GM12878 (cell line): ENCODE measurements at regions of chr20 and their contacts with region 1.

Region 1: GRCh38 chr20:25318471-25319240 is 70.8 kb downstream of the PYGB start:
- DNase-seq: peak; percentile 88
- ATAC-seq: peak; percentile 94
- H3K4me3 ChIP-seq: no peak overlapping the region
- H3K27ac ChIP-seq: peak overlapping the region; percentile 93
- H3K4me1 ChIP-seq: peaks cover 40% of the 10 kb centered on the region
- H3K27me3 ChIP-seq: no peaks in the 10 kb centered on the region
- CTCF ChIP-seq: no peak
- EP300 ChIP-seq: peak; percentile 77 to 89; a peak in 3 of 4 replicates
- POLR2A ChIP-seq: peak; percentile 77
- RAD21 ChIP-seq: no peak

Region 2: DNA sequence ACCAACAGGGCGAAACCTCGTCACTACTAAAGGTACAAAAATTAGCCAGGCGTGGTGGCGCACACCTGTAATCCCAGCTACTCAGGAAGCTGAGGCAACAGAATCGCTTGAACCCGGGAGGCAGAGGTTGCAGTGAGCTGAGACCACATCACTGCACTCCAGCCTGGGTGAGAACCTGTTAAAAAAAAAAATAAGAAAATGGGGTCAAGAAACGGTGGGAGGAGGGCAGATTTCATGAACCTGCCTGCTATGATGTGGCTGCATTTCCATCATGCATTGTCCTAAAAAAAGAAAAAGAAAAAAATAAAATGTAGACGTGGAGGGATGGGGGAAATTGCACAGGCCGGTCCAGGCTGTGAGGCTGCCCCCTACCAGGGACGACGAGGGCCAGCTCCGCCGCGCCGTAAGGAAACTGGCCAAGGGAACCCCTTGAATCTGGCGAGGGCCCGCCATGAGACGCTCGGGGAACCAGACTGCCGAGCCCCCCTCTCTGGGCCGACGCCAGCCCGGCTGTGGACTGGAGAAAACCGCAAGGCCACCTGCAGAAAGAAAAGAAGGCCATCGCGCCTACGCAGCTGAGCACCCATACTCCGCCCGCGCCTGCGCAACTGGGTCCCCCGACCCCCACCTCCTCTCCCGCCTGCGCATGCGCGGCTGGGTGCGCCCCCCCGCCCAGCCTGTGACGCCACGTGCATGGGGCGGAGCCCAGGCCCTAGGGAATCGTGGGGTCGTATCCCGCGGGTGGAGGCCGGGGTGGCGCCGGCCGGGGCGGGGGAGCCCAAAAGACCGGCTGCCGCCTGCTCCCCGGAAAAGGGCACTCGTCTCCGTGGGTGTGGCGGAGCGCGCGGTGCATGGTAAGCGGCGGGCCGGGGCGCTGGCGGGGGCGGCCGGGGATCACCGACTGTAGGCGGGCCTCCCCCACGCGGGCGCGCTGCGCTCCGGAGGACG is 123.4 kb before region 1 on chr20 and contains the start of gene ENTPD6:
- CTCF ChIA-PET with region 1: no interaction called
- POLR2A ChIA-PET with region 1: no interaction called
- RAD21 ChIA-PET with region 1: no interaction called
- SMC1A ChIA-PET with region 1: no interaction called
- in situ Hi-C with region 1: no loop called
- intact Hi-C with region 1: no loop called
- DNase-seq: peak; percentile 63
- ATAC-seq: peak; percentile 83
- H3K4me3 ChIP-seq: peak within 1 kb of the TSS; percentile 91
- H3K27ac ChIP-seq: peak within 1 kb of the TSS; percentile 59; the same call in 1 of the 2 replicates
- H3K4me1 ChIP-seq: peaks cover 11% of the 10 kb centered on the region
- H3K27me3 ChIP-seq: no peaks in the 10 kb centered on the region; a peak in 1 of 4 replicates
- CTCF ChIP-seq: peak in 2 of 3 experiments; percentile 3 to 8; a peak in 1 of 6 replicates
- EP300 ChIP-seq: no peak
- POLR2A ChIP-seq: peak; percentile 79
- RAD21 ChIP-seq: no peak
- polyA plus RNA-seq, gene ENTPD6: 0.53 to 2.5 TPM

Region 3: DNA sequence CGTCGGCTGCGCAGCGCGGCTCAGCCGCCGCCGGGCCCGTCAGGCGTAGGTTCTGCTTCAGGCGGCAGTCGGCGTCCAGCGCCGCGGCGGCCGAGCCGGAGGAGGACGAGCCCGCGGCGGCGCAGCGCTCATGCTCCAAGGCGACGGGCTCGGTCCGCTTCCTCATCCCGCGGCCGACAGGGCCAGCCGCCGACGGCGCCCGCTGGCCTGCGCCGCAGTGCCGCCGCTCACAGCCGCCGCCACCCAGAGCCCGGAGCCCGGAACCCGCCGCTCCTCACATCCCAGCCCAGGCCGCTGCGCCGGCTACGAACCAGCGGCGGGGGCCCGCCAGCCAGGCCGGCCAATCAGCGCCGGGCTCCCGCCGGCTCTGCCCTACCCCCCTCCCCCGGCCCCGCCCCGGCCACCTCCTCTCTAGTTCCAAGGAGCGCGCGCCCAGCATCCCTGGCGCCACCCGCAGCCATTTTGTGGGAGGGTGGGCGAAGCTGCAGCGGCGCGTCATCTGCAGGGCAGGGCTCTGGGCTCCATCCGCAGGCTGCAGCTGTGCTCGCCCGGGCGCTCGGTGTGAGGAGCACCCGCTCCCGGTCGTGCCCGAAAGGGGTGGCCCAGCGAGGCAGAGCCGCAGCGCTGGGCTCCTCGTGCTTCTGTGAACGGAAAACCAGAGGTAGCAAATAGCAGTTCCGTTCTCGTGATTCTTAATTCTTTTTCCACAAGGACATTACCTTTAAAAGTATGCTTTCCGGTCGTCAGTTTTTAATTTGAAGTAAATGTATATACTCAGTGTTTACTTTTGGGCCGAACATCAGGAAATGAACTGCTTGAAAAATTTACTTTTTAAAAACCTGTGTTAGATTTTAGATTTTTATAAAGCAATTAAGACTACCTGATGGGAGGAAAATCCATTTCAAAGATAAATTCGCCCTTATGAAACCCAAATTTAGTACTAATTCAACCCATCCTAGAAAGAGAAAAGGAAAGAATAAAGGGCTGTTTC is 72.2 kb after region 1 on chr20 and contains the start of gene ABHD12:
- CTCF ChIA-PET with region 1: no interaction called
- POLR2A ChIA-PET with region 1: no interaction called
- RAD21 ChIA-PET with region 1: interaction called, 7 read pairs
- SMC1A ChIA-PET with region 1: no interaction called
- in situ Hi-C with region 1: no loop called
- intact Hi-C with region 1: loop called (anchors 2 kb)
- DNase-seq: peak; percentile 77
- ATAC-seq: peak; percentile 96
- H3K4me3 ChIP-seq: peak within 1 kb of the TSS; percentile 78
- H3K27ac ChIP-seq: peak within 1 kb of the TSS; percentile 78
- H3K4me1 ChIP-seq: no peaks in the 10 kb centered on the region; the same call in 1 of the 2 replicates
- H3K27me3 ChIP-seq: no peaks in the 10 kb centered on the region
- CTCF ChIP-seq: 0 out of 6 replicates have a peak, but pooled peaks of 1 of the 3 experiments have one; percentile 1
- EP300 ChIP-seq: no peak
- POLR2A ChIP-seq: peak; percentile 95
- RAD21 ChIP-seq: no peak
- polyA plus RNA-seq, gene ABHD12: 1.5 to 4.1 TPM